CD4-positive, alpha-beta memory T cell (primary cell): ENCODE measurements at regions of chr12 and their contacts with region 1.

Region 1: DNA sequence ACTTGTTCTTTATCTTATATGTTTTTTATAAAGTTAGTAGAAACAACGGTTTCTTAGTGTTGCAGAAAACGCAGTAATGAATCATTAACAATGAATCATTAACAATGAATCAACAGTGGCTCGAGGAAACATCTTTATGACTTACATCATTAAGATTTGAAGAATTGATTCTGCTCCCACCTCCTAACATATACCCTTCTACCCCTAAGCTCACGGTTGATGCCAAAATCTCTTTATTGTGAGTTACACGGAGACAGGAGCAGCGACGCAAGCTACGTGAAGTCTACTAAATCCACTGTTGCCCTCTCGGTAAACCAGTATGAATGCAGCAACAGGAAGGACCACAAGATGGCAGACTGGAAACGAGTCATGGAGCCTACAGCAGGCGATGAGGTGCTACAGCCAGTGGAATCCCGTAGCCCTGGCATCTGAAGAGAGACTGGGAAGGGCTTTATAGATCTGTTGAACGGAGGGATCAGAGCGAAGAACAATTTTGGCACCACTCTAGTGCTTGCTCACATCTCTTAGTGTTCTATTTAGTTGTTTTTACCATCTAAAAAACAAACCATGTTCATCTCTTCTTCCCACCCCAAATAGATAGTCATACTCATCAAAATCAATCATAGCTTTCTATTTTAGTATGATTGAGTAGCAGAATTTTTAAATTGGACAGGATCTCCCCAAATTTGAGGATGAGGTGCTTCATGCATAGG is 332.7 kb downstream of the DUSP6 start:
- DNase-seq: peak; percentile 63 to 72 (median 68)
- H3K4me3 ChIP-seq: peak overlapping the region in 1 of 2 donors; percentile 29
- H3K4me3 Mint-ChIP-seq: no peak overlapping the region
- H3K27ac ChIP-seq: no peak overlapping the region
- H3K27ac Mint-ChIP-seq: no peak overlapping the region
- H3K4me1 ChIP-seq: peaks cover 10% of the 10 kb centered on the region
- H3K4me1 Mint-ChIP-seq: peaks cover 0 to 1% (median 0%) of the 10 kb centered on the region in 4 donors
- H3K27me3 ChIP-seq: no peaks in the 10 kb centered on the region
- H3K27me3 Mint-ChIP-seq: peaks cover 0 to 2% of the 10 kb centered on the region in 2 donors

Region 2: GRCh38 chr12:89040146-89040964 is 20.8 kb after region 1 on chr12:
- CTCF ChIA-PET with region 1: interaction called, 40 read pairs
- POLR2A ChIA-PET with region 1: no interaction called
- intact Hi-C with region 1: loop called (anchors 1 kb)
- DNase-seq: peak; percentile 42 to 68 (median 53)
- H3K4me3 ChIP-seq: no peak overlapping the region
- H3K4me3 Mint-ChIP-seq: peak overlapping the region; percentile 9 to 83 (median 62)
- H3K27ac ChIP-seq: peak overlapping the region; percentile 6
- H3K27ac Mint-ChIP-seq: peak overlapping the region; percentile 47 to 91 (median 80)
- H3K4me1 ChIP-seq: peaks cover 28% of the 10 kb centered on the region
- H3K4me1 Mint-ChIP-seq: peaks cover 26 to 37% (median 26%) of the 10 kb centered on the region in 4 donors
- H3K27me3 ChIP-seq: no peaks in the 10 kb centered on the region
- H3K27me3 Mint-ChIP-seq: peaks cover 0 to 2% of the 10 kb centered on the region in 2 donors

Region 3: DNA sequence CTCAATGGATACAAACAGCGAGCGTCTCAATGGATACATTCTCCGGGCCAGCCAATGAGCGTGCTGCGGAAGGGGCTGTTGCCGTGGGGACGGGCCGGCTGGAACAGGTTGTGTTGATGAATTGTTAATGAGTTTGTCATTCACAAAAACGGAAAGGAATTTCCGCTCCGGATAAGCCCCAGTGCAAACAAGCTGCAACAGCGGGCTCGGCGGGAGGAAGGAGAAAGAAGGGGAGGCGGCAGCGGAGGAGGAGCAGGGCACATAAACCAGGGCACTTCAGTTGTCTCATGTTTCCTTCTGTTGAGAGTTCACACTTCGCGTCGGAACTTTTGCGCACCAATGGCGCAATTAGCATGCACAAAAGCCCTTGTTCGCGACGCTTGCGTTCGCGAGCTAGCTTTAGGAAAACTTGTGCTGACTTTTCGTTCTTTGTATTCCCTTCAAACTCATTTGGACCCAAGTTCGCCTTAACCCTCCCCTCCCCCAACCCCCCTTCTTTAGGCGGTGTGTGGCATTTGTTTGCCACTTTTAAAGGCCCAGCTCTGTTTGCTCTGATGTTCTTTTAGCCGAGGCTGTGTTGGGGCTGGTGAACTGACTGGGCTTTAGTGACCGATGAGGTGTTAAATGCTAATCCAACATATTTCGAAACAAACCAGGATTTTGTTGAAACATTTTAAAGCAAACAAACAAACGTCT is 333.1 kb after region 1 on chr12 and contains the start of gene DUSP6:
- CTCF ChIA-PET with region 1: interaction called, 8 read pairs
- POLR2A ChIA-PET with region 1: no interaction called
- intact Hi-C with region 1: loop called (anchors 5 kb)
- DNase-seq: peak; percentile 86 to 95 (median 90)
- H3K4me3 ChIP-seq: peak within 1 kb of the TSS; percentile 70 to 83
- H3K4me3 Mint-ChIP-seq: peak within 1 kb of the TSS; percentile 87 to 98 (median 92)
- H3K27ac ChIP-seq: peak within 1 kb of the TSS; percentile 68
- H3K27ac Mint-ChIP-seq: peak within 1 kb of the TSS; percentile 86 to 95 (median 92)
- H3K4me1 ChIP-seq: peaks cover 48% of the 10 kb centered on the region
- H3K4me1 Mint-ChIP-seq: peaks cover 27 to 56% (median 40%) of the 10 kb centered on the region in 4 donors
- H3K27me3 ChIP-seq: no peaks in the 10 kb centered on the region
- H3K27me3 Mint-ChIP-seq: no peaks in the 10 kb centered on the region
- total RNA-seq, gene DUSP6: 0.90 to 1.9 TPM

Region 4: GRCh38 chr12:89524541-89525285 is 505.1 kb after region 1 on chr12 and contains the start of gene GALNT4:
- CTCF ChIA-PET with region 1: interaction called, 138 read pairs
- POLR2A ChIA-PET with region 1: no interaction called
- intact Hi-C with region 1: loop called (anchors 1 kb)
- DNase-seq: peak; percentile 78 to 86 (median 80)
- H3K4me3 ChIP-seq: peak within 1 kb of the TSS; percentile 72 to 93
- H3K4me3 Mint-ChIP-seq: peak within 1 kb of the TSS; percentile 95 to 98 (median 98)
- H3K27ac ChIP-seq: peak within 1 kb of the TSS; percentile 87
- H3K27ac Mint-ChIP-seq: peak within 1 kb of the TSS; percentile 83 to 96 (median 95)
- H3K4me1 ChIP-seq: peaks cover 49% of the 10 kb centered on the region
- H3K4me1 Mint-ChIP-seq: peaks cover 34 to 57% (median 44%) of the 10 kb centered on the region in 4 donors
- H3K27me3 ChIP-seq: no peaks in the 10 kb centered on the region
- H3K27me3 Mint-ChIP-seq: no peaks in the 10 kb centered on the region
- total RNA-seq, gene GALNT4: 7.2 to 7.6 TPM

Region 5: DNA sequence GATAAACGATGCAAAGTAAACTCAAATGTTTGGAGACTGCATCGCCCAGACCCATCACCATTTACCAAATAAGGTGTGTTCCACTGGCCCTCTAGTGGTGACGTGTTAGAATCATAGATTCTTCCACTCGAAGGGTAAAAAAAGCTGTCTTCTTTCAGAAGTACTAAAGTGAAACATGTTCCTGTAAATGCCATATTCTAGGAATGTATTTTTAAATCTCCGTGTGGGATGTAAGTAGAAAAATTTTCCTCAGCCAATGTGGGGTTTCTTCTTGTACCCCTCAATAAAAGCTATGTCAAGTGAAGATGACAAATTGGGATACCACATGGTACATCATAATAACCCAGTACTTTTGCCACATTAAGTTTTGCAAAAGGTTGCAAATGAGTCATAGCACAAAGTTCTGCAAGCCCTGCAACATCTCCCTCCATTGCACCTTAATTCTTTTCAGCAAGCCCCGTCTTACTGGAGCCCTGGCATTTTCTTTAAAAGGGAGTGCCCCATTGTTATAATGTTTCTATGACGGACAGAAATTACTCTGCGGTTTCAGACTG is 1834.6 kb after region 1 on chr12:
- CTCF ChIA-PET with region 1: no interaction called
- POLR2A ChIA-PET with region 1: no interaction called
- intact Hi-C with region 1: loop called (anchors 5 kb)
- DNase-seq: peak in 3 of 5 donors; percentile 6 to 21 (median 20)
- H3K4me3 ChIP-seq: no peak overlapping the region
- H3K4me3 Mint-ChIP-seq: no peak overlapping the region
- H3K27ac ChIP-seq: no peak overlapping the region
- H3K27ac Mint-ChIP-seq: no peak overlapping the region
- H3K4me1 ChIP-seq: no peaks in the 10 kb centered on the region
- H3K4me1 Mint-ChIP-seq: no peaks in the 10 kb centered on the region
- H3K27me3 ChIP-seq: no peaks in the 10 kb centered on the region
- H3K27me3 Mint-ChIP-seq: no peaks in the 10 kb centered on the region